HCT116 (cell line): ENCODE measurements at regions of chr10 and their contacts with region 1.

Region 1: GRCh38 chr10:118259288-118259906 is 82.7 kb downstream of the FAM204A start:
- DNase-seq: peak; percentile 32
- ATAC-seq: peak; percentile 98
- H3K4me3 ChIP-seq: no peak overlapping the region
- H3K27ac ChIP-seq: no peak overlapping the region
- H3K4me1 ChIP-seq: no peaks in the 10 kb centered on the region
- H3K27me3 ChIP-seq: peaks cover 54% of the 10 kb centered on the region
- CTCF ChIP-seq: peak; percentile 61 to 99 (median 92); a peak in 5 of 6 replicates
- POLR2A ChIP-seq: no peak
- RAD21 ChIP-seq: peak; percentile 70

Region 2: DNA sequence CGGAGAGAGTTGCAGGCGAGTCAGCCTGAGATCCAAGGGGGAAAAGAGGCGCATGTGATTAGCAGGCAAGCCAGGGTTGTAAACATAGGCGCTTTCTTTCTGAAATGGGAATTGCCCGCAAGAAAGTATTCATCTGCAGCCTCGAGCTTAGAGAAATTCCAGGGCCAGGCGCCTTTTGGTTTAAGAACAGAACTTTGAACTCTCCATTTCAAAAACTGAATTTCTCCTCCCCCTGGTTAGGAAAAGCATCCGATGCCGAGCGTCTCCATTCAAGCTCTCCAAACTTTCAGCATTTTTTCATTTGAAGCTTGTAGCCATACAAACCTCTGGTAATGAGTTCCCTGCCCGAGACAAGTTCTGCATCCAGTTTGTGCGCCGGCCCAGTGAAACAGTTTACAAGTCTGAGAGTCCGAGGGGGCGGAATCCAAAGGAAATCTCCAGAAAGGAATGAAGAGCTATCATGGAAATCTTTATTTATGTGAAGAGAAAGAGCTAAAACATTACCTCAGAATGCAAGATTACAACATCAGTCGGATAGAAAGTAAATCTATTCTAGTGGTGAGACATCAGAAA is 12.8 kb after region 1 on chr10:
- CTCF ChIA-PET with region 1: interaction called, 11 read pairs
- POLR2A ChIA-PET with region 1: no interaction called
- RAD21 ChIA-PET with region 1: no interaction called
- intact Hi-C with region 1: no loop called
- DNase-seq: no peak
- ATAC-seq: no peak
- H3K4me3 ChIP-seq: no peak overlapping the region
- H3K27ac ChIP-seq: no peak overlapping the region
- H3K4me1 ChIP-seq: no peaks in the 10 kb centered on the region
- H3K27me3 ChIP-seq: peaks cover 53% of the 10 kb centered on the region
- CTCF ChIP-seq: no peak
- POLR2A ChIP-seq: no peak
- RAD21 ChIP-seq: no peak

Region 3: GRCh38 chr10:118922226-118922625 is 662.8 kb after region 1 on chr10:
- CTCF ChIA-PET with region 1: no interaction called
- POLR2A ChIA-PET with region 1: no interaction called
- RAD21 ChIA-PET with region 1: no interaction called
- intact Hi-C with region 1: no loop called
- DNase-seq: no peak
- ATAC-seq: no peak
- H3K4me3 ChIP-seq: no peak overlapping the region
- H3K27ac ChIP-seq: no peak overlapping the region
- H3K4me1 ChIP-seq: no peaks in the 10 kb centered on the region
- H3K27me3 ChIP-seq: no peaks in the 10 kb centered on the region
- CTCF ChIP-seq: no peak
- POLR2A ChIP-seq: no peak
- RAD21 ChIP-seq: no peak